GM12878 (cell line): ENCODE measurements at regions of chr3 and their contacts with region 1.

Region 1: DNA sequence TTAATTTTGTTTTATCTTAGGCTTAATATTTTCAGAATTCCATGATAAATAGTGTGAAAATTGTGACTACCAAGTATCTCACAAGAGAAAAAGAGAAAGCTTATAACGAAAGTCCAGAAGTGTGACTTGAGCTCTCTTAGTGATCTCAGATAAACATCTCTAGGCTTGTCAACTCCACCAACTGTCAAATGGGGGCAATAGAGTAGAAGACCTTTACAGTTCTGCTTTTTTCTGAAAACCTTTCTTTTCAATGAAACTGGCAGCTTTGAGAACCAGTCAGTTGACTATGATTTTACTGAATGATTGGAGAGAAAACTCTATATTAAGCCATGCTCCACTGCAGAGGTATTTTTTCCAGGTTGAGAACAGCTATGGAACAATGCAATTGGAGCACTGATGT is 119.2 kb upstream of the TP63 start:
- DNase-seq: no peak
- ATAC-seq: peak; percentile 74
- H3K4me3 ChIP-seq: no peak overlapping the region
- H3K27ac ChIP-seq: no peak overlapping the region
- H3K4me1 ChIP-seq: peaks cover 10% of the 10 kb centered on the region; the same call in 1 of the 2 replicates
- H3K27me3 ChIP-seq: no peaks in the 10 kb centered on the region
- CTCF ChIP-seq: peak; percentile 19 to 46 (median 34); a peak in 5 of 6 replicates
- EP300 ChIP-seq: no peak
- POLR2A ChIP-seq: no peak
- RAD21 ChIP-seq: peak; percentile 85

Region 2: DNA sequence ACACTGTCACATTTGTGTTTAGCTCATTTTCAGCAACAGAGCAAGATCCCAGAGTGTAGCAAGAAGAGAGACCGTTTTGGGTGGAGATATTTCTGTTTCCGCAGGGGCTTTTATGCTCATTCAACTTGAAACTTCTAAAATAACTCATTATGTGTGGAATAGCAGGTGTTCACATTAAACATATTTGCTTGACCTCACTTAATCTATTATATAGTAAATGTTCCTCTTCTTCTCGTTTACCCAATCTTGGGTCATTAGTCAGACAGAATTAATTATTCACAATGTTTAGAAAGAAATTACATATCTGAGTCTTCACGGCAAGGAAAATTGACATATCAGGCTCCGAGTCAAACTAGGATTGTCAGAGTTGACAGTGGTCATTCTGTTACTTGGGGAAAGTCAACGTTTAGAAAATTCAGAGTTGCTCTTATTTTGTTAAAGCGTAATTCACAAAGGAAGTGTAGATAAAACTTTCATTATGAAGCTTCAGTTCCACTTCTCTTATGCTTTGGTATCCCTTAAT is 117.4 kb before region 1 on chr3:
- CTCF ChIA-PET with region 1: interaction called, 3 read pairs
- POLR2A ChIA-PET with region 1: no interaction called
- RAD21 ChIA-PET with region 1: interaction called, 11 read pairs
- SMC1A ChIA-PET with region 1: interaction called, 15 read pairs
- in situ Hi-C with region 1: no loop called
- intact Hi-C with region 1: loop called (anchors 5 kb)
- DNase-seq: peak; percentile 64
- ATAC-seq: peak; percentile 90
- H3K4me3 ChIP-seq: peak overlapping the region; percentile 6; the same call in 1 of the 2 replicates
- H3K27ac ChIP-seq: peak overlapping the region; percentile 86
- H3K4me1 ChIP-seq: peaks cover 28% of the 10 kb centered on the region
- H3K27me3 ChIP-seq: no peaks in the 10 kb centered on the region
- CTCF ChIP-seq: no peak
- EP300 ChIP-seq: peak; percentile 37 to 59; a peak in 3 of 4 replicates
- POLR2A ChIP-seq: no peak
- RAD21 ChIP-seq: 0 out of 2 replicates have a peak, but pooled peaks have one; percentile 20

Region 3: GRCh38 chr3:189563866-189564563 is 52.0 kb after region 1 on chr3:
- CTCF ChIA-PET with region 1: interaction called, 21 read pairs
- POLR2A ChIA-PET with region 1: no interaction called
- RAD21 ChIA-PET with region 1: interaction called, 14 read pairs
- SMC1A ChIA-PET with region 1: interaction called, 15 read pairs
- in situ Hi-C with region 1: no loop called
- intact Hi-C with region 1: no loop called
- DNase-seq: peak; percentile 82
- ATAC-seq: peak; percentile 84
- H3K4me3 ChIP-seq: no peak overlapping the region
- H3K27ac ChIP-seq: peak overlapping the region; percentile 60
- H3K4me1 ChIP-seq: peaks cover 48% of the 10 kb centered on the region
- H3K27me3 ChIP-seq: no peaks in the 10 kb centered on the region
- CTCF ChIP-seq: 0 out of 6 replicates have a peak, but pooled peaks of 2 of the 3 experiments have one; percentile 3 to 5
- EP300 ChIP-seq: peak; percentile 43 to 51; a peak in 2 of 4 replicates
- POLR2A ChIP-seq: no peak
- RAD21 ChIP-seq: peak; percentile 34; the same call in 1 of the 2 replicates

Region 4: DNA sequence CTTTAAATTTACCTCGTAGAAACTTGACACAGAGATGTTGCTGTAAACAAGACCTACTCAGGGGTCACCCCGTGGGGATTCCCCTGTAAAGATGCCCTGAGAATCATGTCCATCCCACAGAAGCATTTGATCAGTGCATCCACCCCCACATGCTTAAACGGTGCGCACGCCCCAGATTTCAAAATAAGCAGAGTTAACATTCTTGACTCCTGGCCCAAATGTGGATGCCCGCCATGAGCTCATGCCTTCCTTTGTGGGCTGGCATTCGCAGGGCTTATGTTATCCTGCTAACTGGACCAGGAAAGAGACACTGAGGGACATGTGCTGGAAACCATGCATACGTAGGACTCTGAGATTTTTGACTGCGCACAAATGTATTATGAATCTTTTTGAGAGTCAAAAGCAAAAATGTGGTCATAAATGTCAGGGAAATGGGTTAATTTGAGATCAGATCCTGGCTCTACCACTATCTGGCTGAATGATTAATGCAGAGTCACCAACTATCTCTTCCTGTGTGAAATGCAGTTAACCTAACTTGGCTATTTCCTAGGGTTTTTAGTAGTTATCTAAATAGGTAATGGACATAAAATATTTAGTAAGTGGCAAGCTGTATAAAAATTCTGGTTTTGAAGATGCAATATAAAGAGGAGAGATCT is 110.0 kb after region 1 on chr3:
- CTCF ChIA-PET with region 1: no interaction called
- POLR2A ChIA-PET with region 1: interaction called, 3 read pairs
- RAD21 ChIA-PET with region 1: interaction called, 3 read pairs
- SMC1A ChIA-PET with region 1: interaction called, 12 read pairs
- in situ Hi-C with region 1: no loop called
- intact Hi-C with region 1: no loop called
- DNase-seq: no peak
- ATAC-seq: no peak
- H3K4me3 ChIP-seq: no peak overlapping the region
- H3K27ac ChIP-seq: no peak overlapping the region
- H3K4me1 ChIP-seq: peaks cover 23% of the 10 kb centered on the region; the same call in 1 of the 2 replicates
- H3K27me3 ChIP-seq: no peaks in the 10 kb centered on the region
- CTCF ChIP-seq: no peak
- EP300 ChIP-seq: no peak
- POLR2A ChIP-seq: no peak
- RAD21 ChIP-seq: no peak

Region 5: GRCh38 chr3:189673535-189673934 is 161.5 kb after region 1 on chr3:
- CTCF ChIA-PET with region 1: interaction called, 4 read pairs
- POLR2A ChIA-PET with region 1: no interaction called
- RAD21 ChIA-PET with region 1: interaction called, 13 read pairs
- SMC1A ChIA-PET with region 1: interaction called, 5 read pairs
- in situ Hi-C with region 1: no loop called
- intact Hi-C with region 1: no loop called
- DNase-seq: peak; percentile 42
- ATAC-seq: peak; percentile 93
- H3K4me3 ChIP-seq: no peak overlapping the region
- H3K27ac ChIP-seq: no peak overlapping the region
- H3K4me1 ChIP-seq: peaks cover 16% of the 10 kb centered on the region
- H3K27me3 ChIP-seq: no peaks in the 10 kb centered on the region
- CTCF ChIP-seq: no peak
- EP300 ChIP-seq: peak; percentile 62 to 72; a peak in 3 of 4 replicates
- POLR2A ChIP-seq: no peak
- RAD21 ChIP-seq: no peak

Region 6: DNA sequence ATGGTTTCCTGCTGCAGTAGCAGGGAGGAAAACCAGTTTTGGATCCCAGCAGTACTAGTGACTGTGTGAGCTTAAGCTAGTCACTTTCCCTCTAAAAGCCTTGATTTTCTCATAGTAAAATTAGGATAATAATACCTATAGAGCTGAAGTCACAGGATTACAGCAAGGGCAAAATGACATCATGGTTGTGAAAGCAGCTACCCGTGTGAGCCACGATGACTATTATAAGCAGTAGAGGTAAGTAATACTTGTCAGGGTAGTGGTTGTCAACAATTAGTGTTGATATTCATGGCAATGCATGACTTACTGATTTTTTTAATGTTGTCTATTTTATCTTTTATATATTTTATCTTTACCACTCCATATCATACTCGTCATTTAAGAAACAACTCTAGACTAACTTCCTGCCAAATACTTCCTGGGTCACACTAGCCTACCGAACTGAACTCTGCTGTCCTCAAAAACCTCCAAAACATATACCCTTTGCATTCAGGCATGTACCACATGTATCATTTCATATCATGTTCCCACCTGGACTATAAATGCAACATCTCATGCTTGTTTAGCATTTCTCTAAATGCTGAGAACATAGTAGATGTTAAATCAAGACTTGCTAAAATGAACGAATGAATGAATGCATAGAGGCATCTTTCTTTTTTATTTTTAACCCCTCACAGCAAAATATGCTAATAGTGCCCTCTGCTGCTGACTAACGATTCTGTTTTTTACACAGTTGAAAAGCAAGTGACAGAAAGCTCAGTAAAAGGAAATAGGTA is 436.1 kb after region 1 on chr3:
- CTCF ChIA-PET with region 1: interaction called, 90 read pairs
- POLR2A ChIA-PET with region 1: no interaction called
- RAD21 ChIA-PET with region 1: interaction called, 66 read pairs
- SMC1A ChIA-PET with region 1: interaction called, 81 read pairs
- in situ Hi-C with region 1: no loop called
- intact Hi-C with region 1: loop called (anchors 2 kb)
- DNase-seq: peak; percentile 32
- ATAC-seq: peak; percentile 76
- H3K4me3 ChIP-seq: no peak overlapping the region
- H3K27ac ChIP-seq: no peak overlapping the region
- H3K4me1 ChIP-seq: peaks cover 3% of the 10 kb centered on the region; the same call in 1 of the 2 replicates
- H3K27me3 ChIP-seq: no peaks in the 10 kb centered on the region; a peak in 1 of 4 replicates
- CTCF ChIP-seq: peak; percentile 55 to 69 (median 60); a peak in 5 of 6 replicates
- EP300 ChIP-seq: no peak
- POLR2A ChIP-seq: no peak
- RAD21 ChIP-seq: peak; percentile 92